ENCODE measurements at regions of chr2 and their contacts with region 1.

Region 1: GRCh38 chr2:174985630-174986029 is 19.6 kb downstream of the CHN1 start:
- DNase-seq: no peak
- ATAC-seq: no peak
- H3K4me3 ChIP-seq: peak overlapping the region in 1 of 10 donors; percentile 6
- H3K27ac ChIP-seq: no peak overlapping the region
- H3K4me1 ChIP-seq: peaks cover 0 to 4% (median 3%) of the 10 kb centered on the region in 9 donors
- H3K27me3 ChIP-seq: no peaks in the 10 kb centered on the region
- CTCF ChIP-seq: peak in 8 of 9 donors; percentile 33 to 73 (median 62)

Region 2: DNA sequence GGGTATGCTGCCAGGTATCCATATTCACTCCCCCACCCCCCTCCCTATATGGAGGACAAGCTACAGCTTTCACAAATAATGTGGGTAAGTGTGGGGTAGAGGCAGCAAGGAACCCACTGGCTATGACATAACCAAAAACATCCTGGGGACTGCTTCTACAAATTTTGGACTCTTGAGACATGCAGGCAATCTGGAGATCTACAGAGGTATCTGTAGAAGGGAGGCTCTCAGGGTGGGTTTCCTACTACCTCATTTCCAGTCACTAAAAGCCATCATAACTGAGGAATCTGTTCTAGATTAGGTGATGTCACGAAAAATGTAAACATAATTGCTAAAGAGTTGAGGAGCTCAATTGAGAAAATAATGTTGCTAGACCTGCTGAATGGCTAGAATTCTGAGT is 341.2 kb before region 1 on chr2:
- intact Hi-C with region 1: no loop called
- DNase-seq: no peak
- ATAC-seq: no peak
- H3K4me3 ChIP-seq: no peak overlapping the region
- H3K27ac ChIP-seq: no peak overlapping the region
- H3K4me1 ChIP-seq: peaks cover 0 to 4% (median 0%) of the 10 kb centered on the region in 9 donors
- H3K27me3 ChIP-seq: no peaks in the 10 kb centered on the region
- CTCF ChIP-seq: no peak

Region 3: GRCh38 chr2:174697255-174697654 is 288.4 kb before region 1 on chr2:
- intact Hi-C with region 1: loop called in 1 of 10 experiments (anchors 5 kb)
- DNase-seq: peak; percentile 27 to 57
- ATAC-seq: peak; percentile 71 to 91 (median 84)
- H3K4me3 ChIP-seq: no peak overlapping the region
- H3K27ac ChIP-seq: no peak overlapping the region
- H3K4me1 ChIP-seq: no peaks in the 10 kb centered on the region
- H3K27me3 ChIP-seq: peaks cover 0 to 11% (median 0%) of the 10 kb centered on the region in 7 donors
- CTCF ChIP-seq: peak; percentile 58 to 84 (median 78)

Measured in heart right ventricle (tissue), 16 donors.